A673 (cell line): ENCODE measurements at regions of chr3 and their contacts with region 1.

Region 1: DNA sequence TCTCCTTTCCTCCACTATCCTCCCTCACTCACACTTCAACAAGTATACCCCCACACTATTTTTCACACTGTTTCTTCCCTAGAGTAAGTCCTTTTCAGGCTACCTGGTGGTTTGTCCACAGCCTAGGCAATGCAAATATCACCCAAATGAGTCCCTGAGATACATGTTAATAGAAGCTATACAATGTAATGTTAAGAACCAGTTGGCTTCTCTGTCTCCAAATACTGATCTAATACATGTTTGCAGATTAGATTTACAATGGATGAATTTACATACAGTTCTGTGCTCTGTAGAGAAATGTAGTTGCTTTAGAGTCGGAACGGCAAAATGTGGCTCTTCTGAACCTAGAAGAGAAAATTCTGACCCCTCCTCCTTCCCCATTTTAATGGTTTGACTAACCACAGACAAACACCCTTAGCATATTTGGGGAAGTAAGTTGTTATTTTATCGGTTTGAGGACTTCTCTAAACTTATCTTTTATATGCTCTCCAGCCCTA is 63.6 kb upstream of the MBNL1 start:
- DNase-seq: no peak
- H3K4me3 ChIP-seq: no peak overlapping the region
- H3K27ac ChIP-seq: no peak overlapping the region
- H3K4me1 ChIP-seq: no peaks in the 10 kb centered on the region
- H3K27me3 ChIP-seq: no peaks in the 10 kb centered on the region
- CTCF ChIP-seq: no peak

Region 2: DNA sequence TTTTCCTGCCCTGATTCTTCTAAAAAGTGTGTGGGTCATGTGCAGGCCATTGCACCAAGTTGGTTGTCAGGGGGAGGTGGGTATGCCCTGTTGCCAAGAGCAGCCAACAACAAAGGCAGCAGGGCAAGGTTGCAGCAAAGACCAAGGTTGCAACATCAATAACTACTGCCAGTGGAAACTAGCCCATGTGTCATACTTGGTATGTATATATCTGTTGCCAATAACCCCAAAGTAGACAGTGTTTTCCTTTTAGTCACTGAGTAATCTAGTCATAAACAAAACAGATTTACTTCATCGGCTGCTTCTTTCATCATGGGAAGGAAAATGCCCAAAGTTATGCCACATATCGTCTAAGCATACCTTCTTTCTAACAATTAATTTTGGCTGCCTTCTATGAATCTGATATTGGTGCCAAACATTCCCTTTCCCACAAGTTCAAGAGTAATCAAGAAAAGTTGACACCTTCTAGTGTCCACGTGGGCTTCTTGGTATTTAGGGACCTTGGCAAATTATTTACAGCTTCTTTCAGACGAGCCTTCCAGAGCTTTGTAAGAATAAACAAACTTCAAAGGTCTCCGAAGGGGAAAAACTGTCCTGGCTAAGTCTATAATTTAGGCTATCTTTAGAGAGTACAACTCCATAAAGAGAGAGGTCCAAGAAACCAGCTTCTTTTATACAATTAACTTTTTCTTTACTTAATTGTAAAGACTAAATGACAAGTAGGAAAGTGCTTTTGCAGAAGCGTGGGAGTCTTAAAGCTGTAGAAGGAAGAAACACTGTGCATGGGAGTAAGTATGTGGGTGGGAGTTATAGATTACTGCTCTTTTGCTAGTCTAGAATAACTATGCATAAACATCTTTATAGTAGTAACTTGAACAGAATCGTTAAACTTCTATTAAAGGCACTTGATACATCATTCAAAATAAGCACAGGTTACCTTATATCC is 53.6 kb after region 1 on chr3:
- CTCF ChIA-PET with region 1: no interaction called
- POLR2A ChIA-PET with region 1: no interaction called
- intact Hi-C with region 1: no loop called
- DNase-seq: no peak
- H3K4me3 ChIP-seq: no peak overlapping the region
- H3K27ac ChIP-seq: no peak overlapping the region
- H3K4me1 ChIP-seq: no peaks in the 10 kb centered on the region
- H3K27me3 ChIP-seq: no peaks in the 10 kb centered on the region
- CTCF ChIP-seq: no peak

Region 3: GRCh38 chr3:153192327-153192726 is 987.2 kb after region 1 on chr3:
- CTCF ChIA-PET with region 1: no interaction called
- POLR2A ChIA-PET with region 1: interaction called, 10 read pairs
- intact Hi-C with region 1: no loop called
- DNase-seq: peak; percentile 54
- H3K4me3 ChIP-seq: no peak overlapping the region
- H3K27ac ChIP-seq: no peak overlapping the region
- H3K4me1 ChIP-seq: peaks cover 3% of the 10 kb centered on the region
- H3K27me3 ChIP-seq: no peaks in the 10 kb centered on the region
- CTCF ChIP-seq: no peak